MCF 10A (cell line): ENCODE measurements at regions of chr15 and their contacts with region 1.

Region 1: DNA sequence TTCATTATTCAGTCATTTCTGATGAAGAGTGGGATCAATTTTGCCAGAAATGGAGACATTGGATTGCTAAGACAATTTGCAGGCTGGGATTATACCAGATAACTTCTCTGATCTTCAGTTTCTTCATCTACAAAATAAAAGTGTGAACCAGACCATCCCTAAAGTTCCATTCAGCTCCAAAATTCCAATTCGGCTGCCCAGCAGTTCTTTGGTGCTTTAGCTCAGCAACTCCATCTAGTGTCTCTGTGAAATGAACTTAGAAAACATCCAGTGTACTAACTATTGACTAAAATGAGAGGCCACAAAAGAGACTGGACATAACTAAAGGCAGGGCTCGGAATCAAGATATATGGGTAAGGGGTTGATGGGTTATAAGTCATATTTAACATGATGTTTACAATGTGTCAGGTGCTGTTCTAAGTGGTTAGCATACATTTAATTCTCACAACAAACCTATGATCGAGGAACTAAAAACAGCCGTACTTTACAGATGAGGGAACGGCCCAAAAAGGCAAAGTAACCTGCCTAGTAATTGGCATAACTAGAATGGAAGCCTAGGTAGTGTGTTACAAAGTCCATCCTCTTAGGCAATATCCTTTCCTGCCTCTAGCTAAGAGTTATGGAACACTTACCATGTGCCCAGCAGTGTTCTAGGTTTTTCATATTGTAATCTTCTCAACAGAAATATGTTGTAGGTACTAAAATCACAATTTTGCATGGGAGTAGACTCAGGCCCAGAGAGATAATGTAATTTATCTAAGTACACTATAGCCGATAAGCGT is 17.0 kb downstream of the THAP10 start:
- DNase-seq: peak; percentile 40
- H3K4me3 Mint-ChIP-seq: no peak overlapping the region
- H3K27ac Mint-ChIP-seq: no peak overlapping the region
- H3K4me1 Mint-ChIP-seq: peaks cover 8% of the 10 kb centered on the region
- H3K27me3 Mint-ChIP-seq: no peaks in the 10 kb centered on the region
- CTCF ChIP-seq: peak; percentile 72

Region 2: DNA sequence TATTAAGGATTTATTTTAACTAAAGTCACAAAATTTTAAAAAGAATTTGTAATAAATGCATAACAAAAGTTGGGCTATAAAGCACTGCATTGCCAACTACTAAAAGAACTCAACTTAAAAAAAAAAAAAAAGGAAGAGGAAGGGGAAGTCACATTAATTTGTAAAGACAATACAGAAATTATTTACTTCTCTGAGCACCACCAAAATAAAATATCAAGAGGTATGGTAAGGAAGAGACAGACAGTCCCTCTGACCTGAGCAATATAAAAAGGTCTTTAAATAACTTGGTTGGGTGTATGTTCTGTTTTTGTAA is 195.3 kb before region 1 on chr15:
- CTCF ChIA-PET with region 1: interaction called, 12 read pairs
- POLR2A ChIA-PET with region 1: interaction called, 3 read pairs
- intact Hi-C with region 1: loop called (anchors 5 kb)
- DNase-seq: no peak
- H3K4me3 Mint-ChIP-seq: no peak overlapping the region
- H3K27ac Mint-ChIP-seq: peak overlapping the region; percentile 58
- H3K4me1 Mint-ChIP-seq: no peaks in the 10 kb centered on the region
- H3K27me3 Mint-ChIP-seq: no peaks in the 10 kb centered on the region
- CTCF ChIP-seq: no peak

Region 3: GRCh38 chr15:70748281-70748747 is 126.9 kb before region 1 on chr15:
- CTCF ChIA-PET with region 1: no interaction called
- POLR2A ChIA-PET with region 1: no interaction called
- intact Hi-C with region 1: loop called (anchors 10 kb)
- DNase-seq: no peak
- H3K4me3 Mint-ChIP-seq: no peak overlapping the region
- H3K27ac Mint-ChIP-seq: no peak overlapping the region
- H3K4me1 Mint-ChIP-seq: peaks cover 7% of the 10 kb centered on the region
- H3K27me3 Mint-ChIP-seq: no peaks in the 10 kb centered on the region
- CTCF ChIP-seq: no peak

Region 4: GRCh38 chr15:70853821-70854666 is 21.1 kb before region 1 on chr15 and contains the start of gene LARP6:
- CTCF ChIA-PET with region 1: interaction called, 12 read pairs
- POLR2A ChIA-PET with region 1: interaction called, 20 read pairs
- intact Hi-C with region 1: loop called (anchors 1 kb)
- DNase-seq: peak; percentile 21
- H3K4me3 Mint-ChIP-seq: peak within 1 kb of the TSS; percentile 83
- H3K27ac Mint-ChIP-seq: peak within 1 kb of the TSS; percentile 91
- H3K4me1 Mint-ChIP-seq: peaks cover 35% of the 10 kb centered on the region
- H3K27me3 Mint-ChIP-seq: no peaks in the 10 kb centered on the region
- CTCF ChIP-seq: no peak
- total RNA-seq, gene LARP6: 67.3 and 77.5 TPM in 2 replicates

Region 5: GRCh38 chr15:70863450-70864218 is 11.6 kb before region 1 on chr15:
- CTCF ChIA-PET with region 1: interaction called, 12 read pairs
- POLR2A ChIA-PET with region 1: interaction called, 9 read pairs
- intact Hi-C with region 1: no loop called
- DNase-seq: peak; percentile 72
- H3K4me3 Mint-ChIP-seq: no peak overlapping the region
- H3K27ac Mint-ChIP-seq: no peak overlapping the region
- H3K4me1 Mint-ChIP-seq: peaks cover 26% of the 10 kb centered on the region
- H3K27me3 Mint-ChIP-seq: no peaks in the 10 kb centered on the region
- CTCF ChIP-seq: no peak